Heart left ventricle (tissue), 16 donors: ENCODE measurements at regions of chr12 and their contacts with region 1.

Region 1: DNA sequence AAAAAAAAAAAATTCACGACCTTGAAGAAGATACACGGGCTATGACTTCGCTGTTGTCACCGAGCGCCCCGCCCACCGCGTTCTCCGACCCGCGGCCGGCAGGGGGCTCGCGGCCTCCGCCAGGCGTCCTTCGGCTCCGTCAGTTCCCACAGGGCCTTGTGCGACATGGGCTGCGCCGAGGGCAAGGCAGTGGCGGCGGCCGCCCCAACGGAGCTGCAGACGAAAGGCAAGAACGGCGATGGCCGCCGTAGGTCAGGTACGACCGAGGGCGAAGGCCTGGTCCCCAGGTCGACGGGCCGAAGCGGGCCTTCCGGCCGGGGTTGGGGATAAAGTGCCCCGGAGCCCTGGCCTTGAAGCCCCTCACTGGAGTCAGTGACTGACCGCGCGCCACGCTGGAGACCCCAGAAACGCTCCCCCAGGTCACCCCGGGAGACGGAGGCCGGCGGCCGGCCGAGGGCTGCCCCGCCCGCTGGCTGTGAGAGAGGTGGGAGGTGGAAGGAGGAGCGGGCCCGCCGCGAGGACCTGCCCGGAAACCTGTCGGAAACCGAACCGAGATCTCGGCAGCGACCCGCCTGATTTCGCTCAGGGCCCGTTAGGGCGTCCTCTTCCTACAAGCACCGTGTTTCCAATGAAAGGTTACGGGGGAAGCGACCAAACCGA is at the start of gene TXNRD1:
- DNase-seq: peak; percentile 86 to 92 (median 89)
- ATAC-seq: peak; percentile 61 to 95 (median 94)
- H3K4me3 ChIP-seq: peak within 1 kb of the TSS; percentile 37 to 82 (median 65)
- H3K27ac ChIP-seq: peak within 1 kb of the TSS; percentile 46 to 95 (median 81)
- H3K4me1 ChIP-seq: peaks cover 5 to 32% (median 18%) of the 10 kb centered on the region in 12 donors
- H3K27me3 ChIP-seq: no peaks in the 10 kb centered on the region
- CTCF ChIP-seq: peak; percentile 76 to 94 (median 88)
- POLR2A ChIP-seq: peak in 1 of 2 donors; percentile 65
- total RNA-seq, gene TXNRD1: 66.1 to 384 (median 90.8) TPM

Region 2: DNA sequence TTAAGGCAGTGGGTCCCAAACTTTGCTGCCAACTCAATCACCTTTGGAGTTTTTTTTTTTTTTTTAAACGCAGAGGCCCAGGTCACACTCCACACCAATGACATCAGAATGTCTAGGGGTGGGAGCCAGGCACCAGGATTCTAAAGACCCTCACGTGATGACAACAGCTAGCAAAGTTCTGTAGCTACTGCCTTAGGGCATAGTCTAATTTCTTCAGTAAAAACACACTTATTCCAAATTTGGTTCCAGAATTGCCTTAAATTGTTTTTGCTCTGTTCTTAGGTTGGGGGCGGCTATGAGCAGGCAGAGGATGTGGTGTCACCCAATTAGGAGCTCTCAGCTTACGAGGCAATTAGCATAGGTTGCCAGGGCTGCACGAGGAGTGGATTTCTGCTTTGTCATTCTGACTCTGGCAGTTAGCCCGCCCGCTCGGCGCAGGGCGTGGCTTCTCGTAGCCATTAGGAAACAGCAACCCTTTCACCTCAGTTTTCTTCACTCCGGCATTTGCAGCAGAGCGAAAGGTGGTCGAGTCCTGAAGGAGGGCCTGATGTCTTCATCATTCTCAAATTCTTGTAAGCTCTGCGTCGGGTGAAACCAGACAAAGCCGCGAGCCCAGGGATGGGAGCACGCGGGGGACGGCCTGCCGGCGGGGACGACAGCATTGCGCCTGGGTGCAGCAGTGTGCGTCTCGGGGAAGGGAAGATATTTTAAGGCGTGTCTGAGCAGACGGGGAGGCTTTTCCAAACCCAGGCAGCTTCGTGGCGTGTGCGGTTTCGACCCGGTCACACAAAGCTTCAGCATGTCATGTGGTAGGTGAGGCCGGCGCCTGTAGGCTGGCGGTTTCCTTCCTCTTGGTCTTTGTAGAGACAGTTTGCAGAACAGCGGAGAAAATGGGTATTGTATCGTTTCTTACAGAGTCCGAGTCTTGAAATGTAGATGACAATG is 71.0 kb after region 1 on chr12:
- intact Hi-C with region 1: loop called in 9 of 10 experiments (anchors 2 to 5 kb)
- DNase-seq: peak; percentile 92 to 95 (median 94)
- ATAC-seq: peak; percentile 91 to 94 (median 93)
- H3K4me3 ChIP-seq: peak overlapping the region; percentile 53 to 92 (median 74)
- H3K27ac ChIP-seq: peak overlapping the region; percentile 75 to 97 (median 94)
- H3K4me1 ChIP-seq: peaks cover 0 to 38% (median 28%) of the 10 kb centered on the region in 12 donors
- H3K27me3 ChIP-seq: no peaks in the 10 kb centered on the region
- CTCF ChIP-seq: peak in 1 of 12 donors; percentile 9
- POLR2A ChIP-seq: peak in 1 of 2 donors; percentile 88

Region 3: DNA sequence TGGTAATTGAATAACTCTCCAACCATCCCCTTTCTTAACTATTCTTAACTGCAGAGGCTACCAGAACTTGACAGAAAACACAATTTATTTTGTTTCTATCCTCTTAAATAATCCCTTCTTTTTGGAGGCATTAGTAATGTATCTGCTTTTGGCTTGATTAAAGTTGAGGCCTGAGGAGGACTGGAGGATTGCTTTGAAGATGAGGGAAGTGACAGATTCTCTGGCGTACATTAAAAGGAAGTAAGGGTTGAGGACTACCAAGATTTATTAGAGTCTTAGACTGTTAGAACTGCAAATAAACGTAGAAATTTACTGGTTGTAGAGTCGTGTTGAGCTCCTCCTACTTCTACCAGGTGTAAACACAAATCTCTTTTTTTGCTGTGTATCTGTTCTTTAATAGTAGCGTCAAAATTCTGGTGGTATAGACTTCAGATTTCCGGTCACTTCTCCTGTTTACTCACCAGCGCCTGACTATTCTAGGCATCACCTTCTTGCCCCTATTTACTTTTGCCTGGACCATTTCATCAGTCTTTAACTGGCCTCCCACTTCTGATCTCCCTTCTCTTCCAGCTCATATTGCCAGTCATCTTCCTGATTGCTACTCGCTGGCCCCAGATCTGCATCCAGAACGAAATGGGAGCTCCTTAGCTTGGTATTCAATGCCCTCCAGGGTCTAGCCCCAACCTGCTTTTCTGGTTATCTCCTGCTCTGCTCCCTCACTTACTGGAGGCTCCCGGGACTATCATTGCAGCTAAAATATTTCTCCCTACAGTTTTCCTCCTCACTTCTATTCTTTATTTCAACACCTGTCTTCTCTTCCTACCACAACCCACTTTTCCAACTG is 79.3 kb after region 1 on chr12:
- intact Hi-C with region 1: loop called in 7 of 10 experiments (anchors 2 to 5 kb)
- DNase-seq: no peak
- ATAC-seq: no peak
- H3K4me3 ChIP-seq: no peak overlapping the region
- H3K27ac ChIP-seq: peak overlapping the region in 1 of 12 donors; percentile 11
- H3K4me1 ChIP-seq: peaks cover 0 to 85% (median 25%) of the 10 kb centered on the region in 12 donors
- H3K27me3 ChIP-seq: no peaks in the 10 kb centered on the region
- CTCF ChIP-seq: no peak
- POLR2A ChIP-seq: no peak

Region 4: GRCh38 chr12:104303538-104304151 is 87.9 kb after region 1 on chr12 and contains the start of gene EID3:
- intact Hi-C with region 1: loop called in 6 of 10 experiments (anchors 5 kb)
- DNase-seq: peak; percentile 91 to 96 (median 93)
- ATAC-seq: peak; percentile 93 to 100 (median 100)
- H3K4me3 ChIP-seq: peak within 1 kb of the TSS; percentile 12 to 75 (median 55)
- H3K27ac ChIP-seq: peak within 1 kb of the TSS; percentile 37 to 82 (median 64)
- H3K4me1 ChIP-seq: peaks cover 0 to 79% (median 40%) of the 10 kb centered on the region in 12 donors
- H3K27me3 ChIP-seq: no peaks in the 10 kb centered on the region
- CTCF ChIP-seq: no peak
- POLR2A ChIP-seq: no peak
- total RNA-seq, gene EID3: 0.44 to 4.0 (median 1.3) TPM

Region 5: DNA sequence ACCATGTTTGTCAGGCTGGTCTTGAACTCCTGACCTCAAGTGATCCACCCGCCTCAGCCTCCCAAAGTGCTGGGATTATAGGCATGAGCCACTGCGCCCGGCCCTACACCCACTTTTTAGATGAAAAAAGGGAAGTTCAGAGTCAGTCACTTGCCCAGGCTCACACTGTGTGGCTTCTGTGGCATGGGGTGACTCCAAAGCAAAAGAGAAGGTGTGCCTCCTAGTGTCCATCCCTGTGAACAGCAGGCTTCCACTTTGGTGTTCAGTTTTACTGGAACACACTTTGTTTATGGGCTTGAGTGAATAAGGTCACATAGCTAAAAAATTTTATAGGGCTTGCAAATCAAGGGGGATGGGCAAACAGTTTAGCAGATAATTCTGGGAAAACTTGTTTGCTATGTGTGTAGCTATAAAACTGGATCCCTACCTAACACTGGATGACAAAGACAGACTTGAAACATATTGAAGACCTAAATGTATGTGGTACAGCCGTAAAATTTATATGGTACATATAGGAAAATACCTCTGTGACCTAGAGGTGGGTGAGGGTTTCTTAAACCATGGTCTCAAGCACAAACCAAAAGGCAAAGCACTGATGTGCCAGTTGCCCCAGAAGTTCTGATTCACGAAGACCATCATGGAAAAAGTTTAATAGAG is 142.7 kb after region 1 on chr12:
- intact Hi-C with region 1: loop called in 7 of 10 experiments (anchors 1 to 5 kb)
- DNase-seq: peak in 4 of 5 donors; percentile 52 to 59 (median 54)
- ATAC-seq: peak; percentile 71 to 81 (median 78)
- H3K4me3 ChIP-seq: no peak overlapping the region
- H3K27ac ChIP-seq: no peak overlapping the region
- H3K4me1 ChIP-seq: peaks cover 0 to 8% (median 0%) of the 10 kb centered on the region in 12 donors
- H3K27me3 ChIP-seq: no peaks in the 10 kb centered on the region
- CTCF ChIP-seq: peak; percentile 70 to 87 (median 84)
- POLR2A ChIP-seq: no peak

Region 6: GRCh38 chr12:104877123-104877705 is 661.4 kb after region 1 on chr12:
- intact Hi-C with region 1: loop called in 1 of 10 experiments (anchors 10 kb)
- DNase-seq: peak in 3 of 5 donors; percentile 27 to 55 (median 33)
- ATAC-seq: peak in 3 of 4 donors; percentile 67 to 77 (median 76)
- H3K4me3 ChIP-seq: no peak overlapping the region
- H3K27ac ChIP-seq: no peak overlapping the region
- H3K4me1 ChIP-seq: peaks cover 0 to 3% (median 0%) of the 10 kb centered on the region in 12 donors
- H3K27me3 ChIP-seq: no peaks in the 10 kb centered on the region
- CTCF ChIP-seq: peak; percentile 37 to 85 (median 76)
- POLR2A ChIP-seq: no peak